ENCODE measurements at regions of chrX and their contacts with region 1.

Region 1: DNA sequence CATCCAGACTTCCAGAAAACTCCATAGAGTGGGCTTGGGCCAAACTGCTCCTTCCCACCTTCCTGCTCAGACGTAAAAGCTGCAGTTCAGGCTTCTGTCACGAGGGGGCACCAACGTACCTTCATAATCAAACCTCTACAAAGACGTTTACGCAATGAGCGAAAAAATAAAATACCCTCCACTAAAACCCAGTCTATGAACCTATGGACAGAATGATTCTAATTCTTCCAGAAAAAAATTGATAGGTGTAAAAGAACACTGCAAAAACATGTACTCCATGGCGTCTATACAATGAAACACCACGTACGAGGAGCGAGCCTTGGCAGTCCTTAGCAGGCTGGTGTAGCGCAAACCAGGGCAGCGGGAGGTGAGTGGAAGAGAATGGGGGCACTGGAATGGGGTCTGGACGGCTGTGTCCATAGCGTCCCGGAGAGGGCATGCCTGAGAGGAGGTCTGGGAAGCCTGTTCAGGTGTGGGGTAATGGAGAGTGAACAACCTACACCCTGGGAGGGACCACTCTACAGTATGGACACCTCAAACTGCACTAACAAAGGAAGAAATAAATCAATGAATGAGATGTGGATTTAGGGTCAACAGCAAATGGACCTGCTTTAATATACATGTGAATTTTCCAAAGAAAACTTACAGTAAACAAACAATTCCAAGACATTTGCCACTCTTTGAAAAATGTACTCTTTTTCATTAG is 14.4 kb upstream of the RAB40A start:
- DNase-seq: peak; percentile 67 to 72
- H3K4me3 ChIP-seq: peak overlapping the region; percentile 11
- H3K4me3 Mint-ChIP-seq: peak overlapping the region; percentile 68
- H3K27ac Mint-ChIP-seq: no peak overlapping the region
- H3K4me1 ChIP-seq: no peaks in the 10 kb centered on the region
- H3K4me1 Mint-ChIP-seq: no peaks in the 10 kb centered on the region
- H3K27me3 ChIP-seq: no peaks in the 10 kb centered on the region
- H3K27me3 Mint-ChIP-seq: no peaks in the 10 kb centered on the region
- CTCF ChIP-seq: peak; percentile 66 to 74

Region 2: GRCh38 chrX:103170216-103170615 is 363.4 kb before region 1 on chrX:
- CTCF ChIA-PET with region 1: no interaction called
- POLR2A ChIA-PET with region 1: no interaction called
- intact Hi-C with region 1: no loop called
- DNase-seq: no peak
- H3K4me3 ChIP-seq: no peak overlapping the region
- H3K4me3 Mint-ChIP-seq: no peak overlapping the region
- H3K27ac Mint-ChIP-seq: no peak overlapping the region
- H3K4me1 ChIP-seq: no peaks in the 10 kb centered on the region
- H3K4me1 Mint-ChIP-seq: no peaks in the 10 kb centered on the region
- H3K27me3 ChIP-seq: no peaks in the 10 kb centered on the region
- H3K27me3 Mint-ChIP-seq: no peaks in the 10 kb centered on the region
- CTCF ChIP-seq: no peak

Region 3: DNA sequence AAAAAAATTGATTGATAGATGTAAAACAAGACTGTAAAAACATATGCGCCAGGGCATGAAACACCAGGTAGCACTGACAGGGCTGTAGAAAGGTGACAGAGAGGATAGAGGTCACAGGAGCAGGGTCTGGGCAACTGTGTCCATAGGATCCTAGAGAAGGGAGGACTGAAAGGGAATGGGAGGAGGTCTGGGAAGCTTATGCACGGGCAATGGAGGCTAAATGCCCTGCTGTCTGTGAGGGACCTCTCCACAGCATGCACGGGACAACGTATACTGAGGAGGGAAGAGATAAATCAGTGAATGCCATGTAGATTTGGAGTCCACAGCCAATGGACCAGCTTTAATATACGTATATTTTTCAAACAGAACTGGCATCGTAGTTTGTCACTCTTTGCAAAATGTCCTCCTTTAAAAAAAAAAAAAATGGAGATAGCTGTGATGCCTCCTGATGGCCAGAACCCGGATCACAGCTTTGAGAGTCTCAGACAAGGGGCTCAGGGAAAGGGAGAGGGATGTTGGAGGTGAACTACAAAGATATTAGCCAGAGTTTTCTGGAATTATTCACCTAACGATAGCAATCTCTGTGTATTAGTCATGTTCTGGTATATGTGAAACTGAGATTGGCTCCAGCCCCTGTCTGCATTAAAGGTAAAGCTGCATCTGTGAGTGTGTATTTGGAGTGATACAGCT is 30.4 kb before region 1 on chrX:
- CTCF ChIA-PET with region 1: no interaction called
- POLR2A ChIA-PET with region 1: no interaction called
- intact Hi-C with region 1: no loop called
- DNase-seq: no peak
- H3K4me3 ChIP-seq: no peak overlapping the region
- H3K4me3 Mint-ChIP-seq: no peak overlapping the region
- H3K27ac Mint-ChIP-seq: no peak overlapping the region
- H3K4me1 ChIP-seq: no peaks in the 10 kb centered on the region
- H3K4me1 Mint-ChIP-seq: no peaks in the 10 kb centered on the region
- H3K27me3 ChIP-seq: no peaks in the 10 kb centered on the region
- H3K27me3 Mint-ChIP-seq: peaks cover 3% of the 10 kb centered on the region
- CTCF ChIP-seq: no peak

Region 4: GRCh38 chrX:103629318-103630170 is 95.9 kb after region 1 on chrX:
- CTCF ChIA-PET with region 1: interaction called, 12 read pairs
- POLR2A ChIA-PET with region 1: interaction called, 5 read pairs
- intact Hi-C with region 1: loop called (anchors 1 kb)
- DNase-seq: peak; percentile 69 to 71
- H3K4me3 ChIP-seq: peak overlapping the region; percentile 75
- H3K4me3 Mint-ChIP-seq: peak overlapping the region; percentile 92
- H3K27ac Mint-ChIP-seq: peak overlapping the region; percentile 84
- H3K4me1 ChIP-seq: no peaks in the 10 kb centered on the region
- H3K4me1 Mint-ChIP-seq: peaks cover 12% of the 10 kb centered on the region
- H3K27me3 ChIP-seq: no peaks in the 10 kb centered on the region
- H3K27me3 Mint-ChIP-seq: no peaks in the 10 kb centered on the region
- CTCF ChIP-seq: peak in 1 of 2 experiments; percentile 86

Region 5: GRCh38 chrX:103674531-103675454 is 141.1 kb after region 1 on chrX:
- CTCF ChIA-PET with region 1: no interaction called
- POLR2A ChIA-PET with region 1: no interaction called
- intact Hi-C with region 1: loop called (anchors 1 kb)
- DNase-seq: no peak
- H3K4me3 ChIP-seq: no peak overlapping the region
- H3K4me3 Mint-ChIP-seq: no peak overlapping the region
- H3K27ac Mint-ChIP-seq: no peak overlapping the region
- H3K4me1 ChIP-seq: no peaks in the 10 kb centered on the region
- H3K4me1 Mint-ChIP-seq: peaks cover 10% of the 10 kb centered on the region
- H3K27me3 ChIP-seq: no peaks in the 10 kb centered on the region
- H3K27me3 Mint-ChIP-seq: no peaks in the 10 kb centered on the region
- CTCF ChIP-seq: no peak

Region 6: GRCh38 chrX:103817502-103817901 is 283.8 kb after region 1 on chrX:
- CTCF ChIA-PET with region 1: no interaction called
- POLR2A ChIA-PET with region 1: no interaction called
- intact Hi-C with region 1: loop called (anchors 2 kb)
- DNase-seq: peak in 1 of 2 experiments; percentile 54
- H3K4me3 ChIP-seq: no peak overlapping the region
- H3K4me3 Mint-ChIP-seq: no peak overlapping the region
- H3K27ac Mint-ChIP-seq: no peak overlapping the region
- H3K4me1 ChIP-seq: peaks cover 8% of the 10 kb centered on the region; the same call in 1 of the 2 replicates
- H3K4me1 Mint-ChIP-seq: peaks cover 8% of the 10 kb centered on the region
- H3K27me3 ChIP-seq: no peaks in the 10 kb centered on the region
- H3K27me3 Mint-ChIP-seq: no peaks in the 10 kb centered on the region
- CTCF ChIP-seq: peak in 1 of 2 experiments; percentile 23